Activated CD4-positive, alpha-beta memory T cell treated with anti-CD3 and anti-CD28 coated beads, Interleukin-2, amount 10 ng/mL, durations not matched to agents 7 days and 5 days (primary cell): ENCODE measurements at regions of chr1 and their contacts with region 1.

Region 1: GRCh38 chr1:89719502-89720306 is 86.8 kb downstream of the LRRC8C start:
- DNase-seq: no peak
- H3K4me3 Mint-ChIP-seq: peak overlapping the region; percentile 61
- H3K27ac Mint-ChIP-seq: peak overlapping the region; percentile 97
- H3K4me1 Mint-ChIP-seq: peaks cover 88% of the 10 kb centered on the region
- H3K27me3 Mint-ChIP-seq: no peaks in the 10 kb centered on the region

Region 2: DNA sequence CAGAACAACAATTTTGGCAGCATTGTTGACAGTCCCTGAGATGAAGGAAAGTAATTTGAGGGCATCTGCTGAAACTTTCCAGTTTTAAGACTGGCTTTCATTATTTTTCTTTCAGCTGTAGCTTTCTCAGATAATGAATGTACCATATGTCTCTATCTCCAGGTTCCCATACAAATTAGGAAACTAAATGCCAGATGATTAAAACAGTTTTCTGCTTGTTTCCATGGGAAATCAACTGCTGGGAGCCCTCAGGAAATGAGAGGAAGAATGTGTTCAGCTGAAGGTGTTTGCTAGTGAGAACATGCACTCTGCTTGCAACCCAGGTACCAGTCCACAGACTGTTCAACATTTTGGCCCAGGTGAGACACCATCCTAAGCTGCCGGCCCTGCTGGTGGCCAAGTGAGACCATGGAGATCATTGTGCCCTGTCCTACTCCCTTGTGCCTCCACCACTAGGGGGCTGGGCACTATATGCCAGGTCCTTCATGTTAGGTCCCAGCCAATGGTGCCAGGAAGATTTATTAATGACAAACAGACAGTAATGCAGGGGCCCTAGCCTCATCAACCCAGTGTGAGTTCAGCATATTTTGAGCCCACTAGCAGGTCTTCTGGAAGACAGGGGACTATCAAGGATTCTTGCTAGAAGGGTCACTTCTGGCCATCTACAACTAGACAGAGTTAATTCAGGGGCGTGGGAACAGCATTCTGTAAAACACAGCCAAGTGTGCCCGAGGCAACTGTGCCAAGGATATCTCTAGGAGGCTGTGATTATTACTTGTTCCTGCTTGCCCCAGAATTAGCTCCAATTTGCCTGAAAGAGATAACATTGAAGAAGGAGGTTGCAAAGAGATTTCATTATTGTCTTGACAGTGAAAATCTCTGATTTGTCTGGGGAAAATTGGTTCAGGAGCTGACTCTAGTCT is 103.8 kb before region 1 on chr1:
- CTCF ChIA-PET with region 1: interaction called, 5 read pairs
- POLR2A ChIA-PET with region 1: interaction called, 84 read pairs
- DNase-seq: no peak
- H3K4me3 Mint-ChIP-seq: no peak overlapping the region
- H3K27ac Mint-ChIP-seq: no peak overlapping the region
- H3K4me1 Mint-ChIP-seq: peaks cover 83% of the 10 kb centered on the region
- H3K27me3 Mint-ChIP-seq: no peaks in the 10 kb centered on the region

Region 3: GRCh38 chr1:89632657-89633247 is 87.0 kb before region 1 on chr1 and contains the start of gene LRRC8C:
- CTCF ChIA-PET with region 1: interaction called, 25 read pairs
- POLR2A ChIA-PET with region 1: interaction called, 103 read pairs
- DNase-seq: peak; percentile 90
- H3K4me3 Mint-ChIP-seq: peak within 1 kb of the TSS; percentile 88
- H3K27ac Mint-ChIP-seq: peak within 1 kb of the TSS; percentile 89
- H3K4me1 Mint-ChIP-seq: peaks cover 71% of the 10 kb centered on the region
- H3K27me3 Mint-ChIP-seq: no peaks in the 10 kb centered on the region
- total RNA-seq, gene LRRC8C: 52.5 to 55.6 TPM

Region 4: GRCh38 chr1:89657886-89658285 is 61.8 kb before region 1 on chr1:
- CTCF ChIA-PET with region 1: no interaction called
- POLR2A ChIA-PET with region 1: interaction called, 50 read pairs
- DNase-seq: no peak
- H3K4me3 Mint-ChIP-seq: peak overlapping the region; percentile 15
- H3K27ac Mint-ChIP-seq: peak overlapping the region; percentile 81
- H3K4me1 Mint-ChIP-seq: peaks cover 88% of the 10 kb centered on the region
- H3K27me3 Mint-ChIP-seq: no peaks in the 10 kb centered on the region

Region 5: DNA sequence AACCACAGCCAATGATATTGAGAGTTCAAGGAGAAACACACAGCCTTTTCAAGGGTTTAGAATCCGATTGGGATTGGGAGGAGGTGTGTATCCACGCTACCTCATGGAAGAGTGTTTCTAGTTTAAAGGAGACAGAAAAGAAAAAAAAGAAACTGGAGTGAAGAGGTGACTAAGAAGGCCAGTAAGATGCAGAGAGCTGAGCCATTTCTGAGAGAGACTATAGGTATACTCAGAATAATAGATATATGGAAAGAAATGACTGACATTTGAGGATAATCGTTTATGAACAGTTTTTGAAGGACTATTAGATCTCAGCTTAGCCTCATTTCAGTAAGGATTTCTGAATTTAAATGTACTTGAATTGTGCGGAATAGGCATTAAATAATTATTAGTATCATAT is 44.0 kb before region 1 on chr1:
- CTCF ChIA-PET with region 1: no interaction called
- POLR2A ChIA-PET with region 1: interaction called, 10 read pairs
- DNase-seq: no peak
- H3K4me3 Mint-ChIP-seq: no peak overlapping the region
- H3K27ac Mint-ChIP-seq: peak overlapping the region; percentile 33
- H3K4me1 Mint-ChIP-seq: peaks cover 73% of the 10 kb centered on the region
- H3K27me3 Mint-ChIP-seq: no peaks in the 10 kb centered on the region

Region 6: GRCh38 chr1:89701746-89702241 is 17.9 kb before region 1 on chr1:
- CTCF ChIA-PET with region 1: interaction called, 5 read pairs
- POLR2A ChIA-PET with region 1: interaction called, 33 read pairs
- DNase-seq: no peak
- H3K4me3 Mint-ChIP-seq: no peak overlapping the region
- H3K27ac Mint-ChIP-seq: peak overlapping the region; percentile 21
- H3K4me1 Mint-ChIP-seq: peaks cover 72% of the 10 kb centered on the region
- H3K27me3 Mint-ChIP-seq: no peaks in the 10 kb centered on the region

Region 7: DNA sequence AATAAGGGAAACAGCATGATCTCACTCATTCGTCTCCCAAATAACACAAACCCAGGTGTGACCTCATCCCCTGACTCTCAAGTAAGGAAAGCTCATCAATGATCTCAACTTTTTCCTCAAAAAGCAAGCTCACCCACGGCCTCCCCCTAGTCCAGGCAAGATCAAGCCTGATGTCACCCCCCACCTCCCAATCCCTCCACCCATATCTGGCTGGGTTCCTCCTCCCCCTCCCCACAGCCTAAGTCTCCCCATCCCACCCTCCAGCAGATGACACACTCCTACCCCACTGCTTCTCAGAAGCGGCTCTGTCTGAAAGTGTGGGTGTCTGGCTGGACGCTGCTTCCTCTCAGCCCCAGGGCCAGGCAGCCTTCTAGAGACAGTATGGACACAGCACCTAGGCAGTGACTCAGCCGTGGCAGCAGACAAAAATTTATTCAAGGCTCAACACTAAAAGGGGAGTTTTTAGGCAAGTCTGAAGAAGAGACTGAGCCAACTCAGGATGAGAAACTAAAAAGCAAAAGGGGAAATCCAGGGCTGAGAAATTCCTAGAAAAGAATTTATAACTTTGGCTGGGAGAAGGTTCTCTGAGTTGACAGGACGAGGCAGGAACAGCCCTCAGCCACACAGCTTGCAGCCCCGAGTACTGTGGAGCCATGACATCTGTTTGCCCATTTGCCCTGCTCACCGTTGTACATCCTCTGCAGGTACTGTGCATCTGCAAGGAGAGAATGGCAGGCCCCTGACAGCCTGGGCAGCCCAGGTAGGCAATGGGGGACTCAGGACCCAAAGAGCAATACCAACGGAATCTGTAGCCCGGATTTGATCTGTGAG is 19.5 kb after region 1 on chr1:
- CTCF ChIA-PET with region 1: no interaction called
- POLR2A ChIA-PET with region 1: interaction called, 34 read pairs
- DNase-seq: peak; percentile 43
- H3K4me3 Mint-ChIP-seq: peak overlapping the region; percentile 29
- H3K27ac Mint-ChIP-seq: peak overlapping the region; percentile 65
- H3K4me1 Mint-ChIP-seq: peaks cover 38% of the 10 kb centered on the region
- H3K27me3 Mint-ChIP-seq: no peaks in the 10 kb centered on the region